Endothelial cell of umbilical vein (primary cell): ENCODE measurements at regions of chr9 and their contacts with region 1.

Region 1: GRCh38 chr9:69605406-69605805 is 66.8 kb downstream of the APBA1 start:
- DNase-seq: no peak
- H3K4me3 ChIP-seq: no peak overlapping the region
- H3K27ac ChIP-seq: no peak overlapping the region
- H3K4me1 ChIP-seq: peaks cover 30% of the 10 kb centered on the region
- H3K27me3 ChIP-seq: no peaks in the 10 kb centered on the region
- CTCF ChIP-seq: no peak
- POLR2A ChIP-seq: no peak

Region 2: GRCh38 chr9:69573651-69574050 is 31.8 kb before region 1 on chr9:
- CTCF ChIA-PET with region 1: no interaction called
- POLR2A ChIA-PET with region 1: no interaction called
- dilution Hi-C with region 1: no loop called
- intact Hi-C with region 1: loop called (anchors 1 kb)
- DNase-seq: peak; percentile 85
- H3K4me3 ChIP-seq: no peak overlapping the region
- H3K27ac ChIP-seq: peak overlapping the region; percentile 82
- H3K4me1 ChIP-seq: peaks cover 43% of the 10 kb centered on the region
- H3K27me3 ChIP-seq: no peaks in the 10 kb centered on the region
- CTCF ChIP-seq: no peak
- POLR2A ChIP-seq: no peak

Region 3: GRCh38 chr9:69582544-69583297 is 22.7 kb before region 1 on chr9:
- CTCF ChIA-PET with region 1: interaction called, 3 read pairs
- POLR2A ChIA-PET with region 1: no interaction called
- dilution Hi-C with region 1: no loop called
- intact Hi-C with region 1: loop called (anchors 1 kb)
- DNase-seq: peak; percentile 62
- H3K4me3 ChIP-seq: no peak overlapping the region
- H3K27ac ChIP-seq: peak overlapping the region; percentile 63
- H3K4me1 ChIP-seq: peaks cover 35% of the 10 kb centered on the region
- H3K27me3 ChIP-seq: no peaks in the 10 kb centered on the region
- CTCF ChIP-seq: no peak
- POLR2A ChIP-seq: no peak

Region 4: DNA sequence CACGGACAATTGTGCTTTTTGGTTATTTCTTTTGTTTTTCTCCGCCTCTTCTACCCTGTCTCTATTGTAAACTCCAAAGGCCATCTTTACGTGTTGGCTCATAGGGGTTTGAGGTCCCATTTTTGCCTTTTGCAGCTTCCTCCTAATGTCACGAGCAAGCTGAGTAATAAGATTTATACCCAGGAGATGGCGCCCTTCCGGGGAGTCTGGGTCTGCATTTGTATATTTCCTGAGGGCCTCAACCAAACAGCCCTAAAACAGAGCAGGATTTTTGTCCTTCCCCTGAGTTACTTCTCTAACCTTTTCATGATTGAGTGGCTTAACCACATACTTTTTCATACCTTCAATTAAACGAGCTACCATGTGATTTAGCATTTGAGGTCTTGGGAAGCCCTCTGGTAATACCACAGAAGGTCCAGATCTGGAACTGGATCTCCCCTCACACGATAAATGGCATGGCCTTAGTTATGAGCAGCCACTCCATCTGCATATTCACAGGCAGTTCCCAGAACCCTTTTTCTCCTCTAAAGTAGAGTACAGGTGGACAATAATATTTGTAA is 204.0 kb after region 1 on chr9:
- CTCF ChIA-PET with region 1: no interaction called
- POLR2A ChIA-PET with region 1: no interaction called
- dilution Hi-C with region 1: no loop called
- intact Hi-C with region 1: no loop called
- DNase-seq: peak; percentile 36
- H3K4me3 ChIP-seq: no peak overlapping the region
- H3K27ac ChIP-seq: no peak overlapping the region
- H3K4me1 ChIP-seq: no peaks in the 10 kb centered on the region
- H3K27me3 ChIP-seq: peaks cover 41 to 46% of the 10 kb centered on the region in 2 experiments
- CTCF ChIP-seq: peak; percentile 33 to 35
- POLR2A ChIP-seq: no peak